ENCODE measurements at regions of chr1 and their contacts with region 1.

Region 1: DNA sequence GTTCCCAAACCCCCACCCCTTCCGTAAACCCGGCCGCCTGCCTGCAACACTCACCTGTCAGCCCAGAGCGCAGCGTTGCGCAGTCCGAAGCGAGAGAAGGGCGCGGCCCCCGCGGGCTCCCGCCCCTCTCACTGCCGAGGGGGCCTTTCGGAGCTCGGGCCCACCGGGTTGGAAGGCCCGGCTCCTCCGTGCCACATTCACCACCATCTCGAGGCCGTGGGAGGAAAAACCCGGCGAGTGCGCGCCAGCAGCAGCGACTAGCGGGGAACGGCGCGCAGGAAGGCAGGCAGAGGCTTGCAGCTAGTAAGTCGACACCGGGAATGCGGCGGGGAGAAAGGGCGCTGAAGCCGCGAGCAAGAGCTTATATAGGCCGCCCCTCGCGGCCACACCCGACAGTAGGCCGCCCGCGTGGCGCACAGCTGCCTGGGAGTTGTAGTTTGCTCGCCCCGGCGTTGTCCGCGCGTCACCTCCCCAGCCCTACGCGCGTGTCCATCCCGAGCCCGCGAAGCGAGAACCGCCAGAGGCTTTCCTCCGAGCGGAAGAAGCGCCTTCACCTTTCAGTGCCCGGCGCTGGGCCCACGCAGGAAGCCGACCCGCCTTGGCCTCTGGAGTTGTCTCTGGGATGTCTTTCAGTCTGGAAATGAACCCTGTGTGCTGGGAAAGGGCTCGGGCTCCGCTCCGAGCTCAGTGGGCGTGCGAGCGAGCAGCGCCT is 10.4 kb upstream of the RAB42 start:
- DNase-seq: peak; percentile 95
- ATAC-seq: peak; percentile 91
- H3K4me3 Mint-ChIP-seq: peak overlapping the region; percentile 100
- H3K27ac Mint-ChIP-seq: peak overlapping the region; percentile 92
- H3K4me1 Mint-ChIP-seq: peaks cover 22% of the 10 kb centered on the region
- H3K27me3 Mint-ChIP-seq: no peaks in the 10 kb centered on the region
- CTCF ChIP-seq: no peak

Region 2: DNA sequence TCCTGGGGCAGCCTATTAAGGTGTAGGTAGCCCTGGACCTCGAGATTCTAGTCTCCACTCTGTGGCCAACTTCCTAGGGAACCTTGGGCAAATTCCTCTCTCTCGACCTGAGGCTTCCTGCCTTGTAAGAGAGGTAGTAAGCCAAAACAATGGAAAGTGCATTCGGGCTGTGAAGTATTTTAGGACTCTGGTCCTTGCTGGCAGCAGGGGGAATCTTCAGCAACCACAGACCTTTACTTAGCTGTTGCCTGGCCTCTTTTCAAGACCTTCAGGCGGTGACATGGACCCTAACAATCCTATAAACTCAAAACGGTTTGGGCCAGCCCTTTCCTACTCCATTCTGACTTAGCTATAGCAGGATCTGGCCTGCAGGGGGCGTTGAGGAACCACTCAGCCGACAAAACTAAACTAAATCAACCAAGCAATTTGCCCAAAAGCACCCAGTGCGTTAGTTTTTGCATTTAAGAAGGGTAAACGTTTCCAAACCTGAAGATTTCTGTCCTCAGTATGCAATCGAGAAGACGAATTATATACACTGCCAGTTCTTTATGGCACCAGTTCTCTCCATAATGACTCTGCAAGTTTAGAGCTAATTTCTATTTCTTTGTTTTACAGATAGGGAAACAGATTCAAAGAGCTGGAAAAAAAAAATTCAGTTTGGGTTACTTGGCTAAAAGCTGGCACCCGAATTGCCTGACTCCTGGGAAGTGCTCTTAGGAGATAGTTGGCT is 333.2 kb before region 1 on chr1:
- CTCF ChIA-PET with region 1: interaction called, 3 read pairs
- POLR2A ChIA-PET with region 1: interaction called, 10 read pairs
- intact Hi-C with region 1: no loop called
- DNase-seq: peak; percentile 95
- ATAC-seq: peak; percentile 31
- H3K4me3 Mint-ChIP-seq: peak overlapping the region; percentile 84
- H3K27ac Mint-ChIP-seq: peak overlapping the region; percentile 96
- H3K4me1 Mint-ChIP-seq: peaks cover 51% of the 10 kb centered on the region
- H3K27me3 Mint-ChIP-seq: no peaks in the 10 kb centered on the region
- CTCF ChIP-seq: peak; percentile 93

Region 3: DNA sequence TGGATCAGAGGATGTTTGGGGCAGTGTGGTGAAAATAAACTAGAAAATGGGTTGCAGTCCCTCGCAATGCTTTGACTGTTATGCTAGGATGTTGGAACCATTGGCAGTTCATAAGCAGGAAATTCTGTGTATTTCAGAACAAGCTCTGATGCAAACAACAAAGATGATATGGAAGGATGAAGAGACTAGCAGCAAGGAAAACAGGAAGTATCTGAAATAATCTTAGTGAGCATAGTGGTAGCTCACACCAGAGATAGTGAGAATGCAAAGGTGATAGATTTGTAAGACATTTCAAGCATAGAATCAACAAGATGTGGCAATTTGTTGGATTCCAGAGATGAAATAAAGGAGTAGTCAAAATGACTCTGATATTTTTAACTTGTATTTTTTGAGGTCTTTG is 87.0 kb before region 1 on chr1:
- CTCF ChIA-PET with region 1: no interaction called
- POLR2A ChIA-PET with region 1: no interaction called
- intact Hi-C with region 1: no loop called
- DNase-seq: no peak
- ATAC-seq: no peak
- H3K4me3 Mint-ChIP-seq: no peak overlapping the region
- H3K27ac Mint-ChIP-seq: peak overlapping the region; percentile 47
- H3K4me1 Mint-ChIP-seq: peaks cover 4% of the 10 kb centered on the region
- H3K27me3 Mint-ChIP-seq: no peaks in the 10 kb centered on the region
- CTCF ChIP-seq: no peak

Region 4: DNA sequence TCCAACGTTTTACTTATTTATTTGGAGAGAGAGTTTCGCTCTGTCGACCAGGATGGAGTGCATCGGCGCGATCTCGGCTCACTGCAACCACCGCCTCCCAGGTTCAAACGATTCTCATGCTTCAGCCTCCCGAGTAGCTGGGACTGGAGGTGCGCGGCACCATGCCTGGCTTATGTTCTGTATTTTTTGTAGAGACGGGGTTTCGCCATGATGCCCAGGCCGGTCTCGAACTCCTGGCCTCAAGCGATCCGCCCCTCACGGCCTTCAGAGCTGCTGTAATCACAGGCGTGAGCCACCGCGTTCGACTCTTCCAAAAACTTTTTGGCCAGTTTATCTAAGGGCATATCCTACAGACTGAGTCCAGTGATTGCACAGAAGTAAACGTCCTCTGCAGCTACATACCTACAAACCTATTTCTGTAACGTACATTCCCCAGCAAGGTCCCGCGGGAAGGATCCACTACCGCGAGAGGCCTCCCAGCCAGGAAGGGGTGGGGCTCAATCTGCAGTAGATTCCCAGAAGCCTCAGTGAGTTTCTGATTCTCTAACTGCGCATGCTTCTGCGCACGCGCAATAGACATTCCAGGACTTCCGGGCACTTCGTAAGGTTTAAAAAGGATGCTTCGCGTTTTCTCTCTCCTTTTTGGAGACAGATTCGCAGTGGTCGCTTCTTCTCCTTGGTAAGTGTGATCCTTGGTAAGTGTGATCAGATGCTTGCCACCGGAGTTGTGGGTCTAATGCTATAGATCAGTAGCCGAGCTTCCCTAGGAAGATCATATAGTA is 76.1 kb before region 1 on chr1 and contains the start of gene RCC1:
- CTCF ChIA-PET with region 1: interaction called, 3 read pairs
- POLR2A ChIA-PET with region 1: interaction called, 315 read pairs
- intact Hi-C with region 1: no loop called
- DNase-seq: peak; percentile 98
- ATAC-seq: peak; percentile 88
- H3K4me3 Mint-ChIP-seq: peak within 1 kb of the TSS; percentile 94
- H3K27ac Mint-ChIP-seq: peak within 1 kb of the TSS; percentile 95
- H3K4me1 Mint-ChIP-seq: peaks cover 26% of the 10 kb centered on the region
- H3K27me3 Mint-ChIP-seq: peaks cover 1% of the 10 kb centered on the region
- CTCF ChIP-seq: no peak
- total RNA-seq, gene RCC1: 108 to 113 TPM

Region 5: DNA sequence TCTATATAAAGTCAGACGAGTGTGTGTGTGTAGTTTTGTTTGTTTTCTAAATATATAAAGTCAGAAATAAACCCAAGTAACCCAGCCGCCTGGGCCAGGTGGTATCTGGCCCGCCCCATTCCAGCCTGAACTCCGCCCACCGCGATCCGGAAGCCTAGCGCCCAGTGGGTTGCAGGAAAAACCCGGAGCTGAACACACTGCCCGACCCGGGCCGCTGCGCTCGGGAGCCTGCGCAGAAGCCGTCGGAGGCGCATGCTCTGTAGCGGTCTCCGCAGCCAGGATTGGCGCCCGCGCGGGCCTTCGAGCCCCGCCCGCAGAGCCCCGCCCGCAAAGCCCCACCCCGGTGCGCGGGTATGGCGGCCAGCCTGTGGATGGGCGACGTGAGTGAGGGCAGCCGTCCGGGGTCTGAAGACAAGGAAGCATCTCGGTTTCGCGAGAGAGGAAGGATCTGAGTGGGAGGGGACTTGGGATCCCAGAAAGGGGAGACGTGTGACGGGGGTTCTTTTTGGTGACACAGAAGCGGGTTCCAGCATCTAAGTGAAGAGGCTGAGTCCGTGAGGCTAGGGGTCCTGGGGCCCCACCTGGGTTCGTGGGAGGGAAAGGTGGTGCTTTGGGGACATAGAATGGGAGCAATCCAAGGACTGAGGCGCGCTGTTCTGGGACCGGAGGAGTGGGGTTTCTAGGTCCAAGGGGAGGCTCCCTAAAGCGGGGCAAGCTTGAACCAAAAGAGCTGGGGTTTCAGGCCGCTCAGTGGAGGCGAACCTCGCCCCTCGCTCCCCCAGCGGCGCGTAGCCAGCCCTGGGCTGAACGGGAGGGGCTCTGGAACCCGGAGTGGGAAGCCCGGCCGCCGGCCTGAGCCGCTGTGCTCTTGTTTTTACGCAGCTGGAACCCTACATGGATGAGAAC is 28.7 kb before region 1 on chr1 and contains the start of gene TRNAU1AP:
- CTCF ChIA-PET with region 1: interaction called, 30 read pairs
- POLR2A ChIA-PET with region 1: interaction called, 264 read pairs
- intact Hi-C with region 1: no loop called
- DNase-seq: peak; percentile 98
- ATAC-seq: peak; percentile 97
- H3K4me3 Mint-ChIP-seq: peak within 1 kb of the TSS; percentile 95
- H3K27ac Mint-ChIP-seq: peak within 1 kb of the TSS; percentile 98
- H3K4me1 Mint-ChIP-seq: peaks cover 13% of the 10 kb centered on the region
- H3K27me3 Mint-ChIP-seq: no peaks in the 10 kb centered on the region
- CTCF ChIP-seq: no peak
- total RNA-seq, gene TRNAU1AP: 42.5 to 47.8 TPM

Region 6: DNA sequence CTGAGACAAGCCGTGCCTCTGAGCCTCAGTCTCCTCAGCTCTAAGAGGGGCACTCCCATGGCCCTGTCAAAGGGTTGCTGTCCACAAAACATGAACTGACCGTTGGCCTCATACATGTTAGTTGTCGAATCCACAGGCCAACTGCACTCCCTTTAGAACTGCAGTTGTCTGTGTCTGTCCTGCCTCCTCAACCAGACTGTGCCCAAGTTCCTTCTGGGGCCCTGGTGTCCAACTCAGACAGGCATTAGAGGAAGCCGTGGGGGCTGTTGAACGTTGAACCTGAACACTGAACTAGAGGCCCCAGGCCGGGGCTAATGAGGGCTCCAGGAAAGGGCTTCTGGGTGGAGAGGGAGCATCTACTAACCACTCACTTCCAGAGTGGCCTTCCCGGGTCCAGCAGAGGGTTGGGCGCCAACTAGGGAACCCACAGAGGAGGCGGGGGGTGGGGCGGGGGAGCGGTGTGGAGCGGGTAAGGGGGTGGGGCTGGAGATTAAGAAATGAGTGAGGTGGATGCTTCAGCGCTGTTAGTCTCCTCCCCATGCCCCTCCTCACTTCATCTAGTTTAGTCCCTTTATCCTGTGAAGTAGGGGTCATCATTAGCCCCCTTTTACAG is 10.1 kb after region 1 on chr1 and contains the start of gene RAB42:
- CTCF ChIA-PET with region 1: no interaction called
- POLR2A ChIA-PET with region 1: interaction called, 43 read pairs
- intact Hi-C with region 1: no loop called
- DNase-seq: no peak
- ATAC-seq: peak; percentile 61
- H3K4me3 Mint-ChIP-seq: peak within 1 kb of the TSS; percentile 68
- H3K27ac Mint-ChIP-seq: no peak within 1 kb of the TSS
- H3K4me1 Mint-ChIP-seq: peaks cover 9% of the 10 kb centered on the region
- H3K27me3 Mint-ChIP-seq: peaks cover 10% of the 10 kb centered on the region
- CTCF ChIP-seq: no peak
- total RNA-seq, gene RAB42: not detected

Region 7: DNA sequence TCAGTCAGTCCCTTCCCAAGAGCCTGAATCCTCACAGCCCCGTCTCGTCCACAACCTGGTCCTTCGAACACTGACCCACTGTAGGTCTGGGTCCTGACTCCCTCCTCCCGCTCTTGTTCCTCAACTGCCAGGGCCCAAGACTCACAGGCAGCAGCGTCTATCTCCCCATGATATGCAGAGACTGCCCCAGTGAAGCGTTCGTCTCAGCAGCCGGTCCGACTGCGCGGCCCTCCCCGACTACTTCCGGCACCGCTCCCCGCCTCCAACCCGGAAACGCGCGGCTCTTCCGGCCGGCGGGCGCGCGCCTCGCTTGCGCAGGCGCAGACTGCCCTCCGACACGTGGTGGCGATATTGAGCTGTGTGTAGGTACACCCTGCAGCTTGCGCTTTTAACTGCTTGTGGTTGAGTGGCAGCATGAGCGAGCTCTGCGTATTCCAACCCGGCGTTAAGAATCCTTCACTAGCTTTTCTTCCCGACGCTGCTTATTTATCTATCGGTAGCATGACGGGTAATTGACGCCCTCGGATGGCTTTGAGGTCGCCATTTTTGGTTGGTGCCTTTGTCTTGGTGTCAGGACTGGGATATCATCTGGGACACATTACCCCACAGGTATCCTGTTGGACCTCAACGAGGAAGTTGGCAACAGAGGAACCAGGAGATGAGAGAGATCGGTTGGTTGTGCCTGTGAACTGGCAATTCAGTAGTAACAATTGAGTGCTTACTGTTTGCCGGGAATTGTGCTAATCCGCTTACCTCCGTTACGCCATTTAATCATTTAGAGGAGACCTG is 61.3 kb after region 1 on chr1 and contains the start of gene TAF12:
- CTCF ChIA-PET with region 1: interaction called, 5 read pairs
- POLR2A ChIA-PET with region 1: interaction called, 189 read pairs
- intact Hi-C with region 1: no loop called
- DNase-seq: peak; percentile 91
- ATAC-seq: peak; percentile 84
- H3K4me3 Mint-ChIP-seq: peak within 1 kb of the TSS; percentile 98
- H3K27ac Mint-ChIP-seq: peak within 1 kb of the TSS; percentile 97
- H3K4me1 Mint-ChIP-seq: peaks cover 44% of the 10 kb centered on the region
- H3K27me3 Mint-ChIP-seq: no peaks in the 10 kb centered on the region
- CTCF ChIP-seq: peak; percentile 42
- total RNA-seq, gene TAF12: 21.3 to 23.0 TPM

Region 8: DNA sequence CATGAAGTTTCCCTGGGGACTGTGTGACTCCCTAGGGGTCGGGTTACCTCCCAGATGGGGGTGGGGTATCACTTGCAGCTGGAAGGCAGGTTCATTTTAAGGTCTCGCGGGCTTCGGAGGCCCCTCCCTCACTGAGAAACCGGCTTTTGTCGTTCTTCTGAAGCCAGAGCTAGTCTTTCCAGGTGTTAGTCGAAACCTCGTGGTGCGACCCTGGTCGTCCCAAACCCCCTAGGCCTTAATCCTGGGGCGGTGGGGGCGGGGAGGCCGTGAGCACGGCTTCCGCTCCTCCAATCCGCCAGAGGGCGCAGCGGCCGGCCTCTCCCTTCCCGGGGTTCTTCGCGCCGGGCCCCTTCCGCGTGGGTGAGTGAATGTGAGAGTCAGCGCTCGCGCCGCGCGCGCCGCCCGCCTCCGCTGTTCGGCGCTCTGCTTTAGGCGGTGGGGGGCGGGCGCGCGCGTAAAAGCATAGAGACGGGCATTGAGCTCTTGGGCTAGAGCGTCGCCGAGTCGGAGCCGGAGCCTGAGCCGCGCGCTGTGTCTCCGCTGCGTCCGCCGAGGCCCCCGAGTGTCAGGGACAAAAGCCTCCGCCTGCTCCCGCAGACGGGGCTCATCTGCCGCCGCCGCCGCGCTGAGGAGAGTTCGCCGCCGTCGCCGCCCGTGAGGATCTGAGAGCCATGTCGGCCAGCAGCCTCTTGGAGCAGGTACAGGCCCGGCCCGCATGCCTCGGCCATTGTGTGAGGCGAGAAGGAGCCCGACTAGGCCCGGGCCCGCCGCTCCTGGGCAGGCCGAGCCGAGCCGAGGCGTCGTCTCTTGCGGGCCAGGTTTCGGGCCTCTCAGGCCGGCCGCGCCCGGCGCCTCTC is 155.0 kb after region 1 on chr1 and contains the start of gene YTHDF2:
- CTCF ChIA-PET with region 1: interaction called, 6 read pairs
- POLR2A ChIA-PET with region 1: interaction called, 29 read pairs
- intact Hi-C with region 1: no loop called
- DNase-seq: peak; percentile 99
- ATAC-seq: peak; percentile 91
- H3K4me3 Mint-ChIP-seq: peak within 1 kb of the TSS; percentile 98
- H3K27ac Mint-ChIP-seq: peak within 1 kb of the TSS; percentile 92
- H3K4me1 Mint-ChIP-seq: peaks cover 35% of the 10 kb centered on the region
- H3K27me3 Mint-ChIP-seq: no peaks in the 10 kb centered on the region
- CTCF ChIP-seq: peak; percentile 97
- total RNA-seq, gene YTHDF2: 72.2 to 82.1 TPM